PC-9 (cell line): ENCODE measurements at regions of chr3 and their contacts with region 1.

Region 1: DNA sequence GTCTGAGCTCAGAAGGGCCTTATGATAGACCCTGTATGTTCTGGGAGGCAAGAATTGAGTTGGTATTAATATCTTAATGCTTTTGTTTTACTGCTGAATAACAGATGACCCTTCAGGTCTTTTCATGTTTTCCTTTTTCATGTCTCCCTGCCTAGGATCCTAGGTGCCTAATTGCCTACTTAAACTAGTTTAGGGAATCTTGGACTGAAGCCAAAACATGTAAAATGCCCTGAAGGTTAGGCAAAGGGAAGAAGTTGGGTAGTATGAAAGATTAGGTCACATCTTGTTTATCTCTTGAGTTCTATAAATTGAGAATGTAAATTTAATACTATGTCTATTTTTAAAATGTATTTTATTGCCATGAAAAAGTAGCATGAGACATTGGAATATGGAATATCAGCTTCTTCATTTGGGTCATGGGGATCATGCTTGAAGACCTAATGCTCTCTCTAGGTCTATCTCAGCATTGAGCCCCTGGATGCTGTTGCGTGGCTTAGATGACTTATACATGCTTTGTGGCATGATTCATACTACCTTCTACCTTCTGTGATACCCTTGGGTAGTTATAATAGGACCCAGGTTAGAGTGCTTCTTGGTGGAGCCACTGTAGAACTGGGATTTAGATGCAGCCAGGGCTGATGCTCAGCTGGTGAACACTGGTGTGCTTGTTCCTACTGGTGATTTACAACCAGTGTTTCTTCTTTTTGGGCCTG is 26.4 kb downstream of the RBM6 start:
- DNase-seq: no peak
- H3K4me3 ChIP-seq: no peak overlapping the region
- H3K27ac ChIP-seq: no peak overlapping the region
- H3K4me1 ChIP-seq: no peaks in the 10 kb centered on the region
- H3K27me3 ChIP-seq: no peaks in the 10 kb centered on the region
- CTCF ChIP-seq: no peak

Region 2: DNA sequence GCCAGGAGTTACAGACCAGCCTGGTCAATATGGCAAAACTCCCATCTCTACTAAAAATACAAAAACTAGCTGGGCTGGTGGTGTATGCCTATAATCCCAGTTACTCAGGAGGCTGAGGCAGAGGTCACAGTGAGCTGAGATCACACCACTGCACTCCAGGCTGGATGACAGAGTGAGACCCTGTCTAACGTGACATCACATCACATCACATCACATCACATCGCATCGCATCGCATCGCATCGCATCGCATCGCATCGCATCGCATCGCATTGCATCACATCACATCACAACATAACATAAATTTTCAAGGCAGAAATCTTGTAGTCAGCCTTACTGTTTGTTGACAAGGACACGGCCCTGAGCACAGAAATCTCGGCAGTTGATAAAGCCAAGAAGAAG is 18.0 kb after region 1 on chr3:
- CTCF ChIA-PET with region 1: no interaction called
- POLR2A ChIA-PET with region 1: interaction called, 18 read pairs
- intact Hi-C with region 1: no loop called
- DNase-seq: no peak
- H3K4me3 ChIP-seq: no peak overlapping the region
- H3K27ac ChIP-seq: no peak overlapping the region
- H3K4me1 ChIP-seq: no peaks in the 10 kb centered on the region
- H3K27me3 ChIP-seq: no peaks in the 10 kb centered on the region
- CTCF ChIP-seq: no peak

Region 3: DNA sequence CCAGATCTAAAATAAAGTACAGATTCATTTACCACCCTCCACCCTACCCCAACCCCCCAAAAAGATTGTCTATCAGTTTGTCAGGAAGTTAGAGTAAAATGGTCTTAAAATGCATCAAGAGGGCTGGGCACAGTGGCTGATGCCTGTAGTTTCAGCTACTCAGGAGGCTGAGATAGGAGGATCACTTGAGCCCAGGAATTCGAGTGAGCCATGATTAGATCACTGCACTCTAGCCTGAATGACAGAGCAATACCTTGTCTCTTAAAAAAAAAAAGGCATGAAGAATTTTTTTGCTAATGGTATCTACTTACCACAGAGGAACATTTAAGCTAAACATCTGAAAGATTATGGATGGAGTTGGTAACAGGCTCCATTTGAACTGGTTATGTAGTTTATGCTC is 44.6 kb after region 1 on chr3:
- CTCF ChIA-PET with region 1: interaction called, 10 read pairs
- POLR2A ChIA-PET with region 1: no interaction called
- intact Hi-C with region 1: no loop called
- DNase-seq: no peak
- H3K4me3 ChIP-seq: no peak overlapping the region
- H3K27ac ChIP-seq: no peak overlapping the region
- H3K4me1 ChIP-seq: no peaks in the 10 kb centered on the region
- H3K27me3 ChIP-seq: no peaks in the 10 kb centered on the region
- CTCF ChIP-seq: no peak